B cell (primary cell): ENCODE measurements at regions of chr10 and their contacts with region 1.

Region 1: DNA sequence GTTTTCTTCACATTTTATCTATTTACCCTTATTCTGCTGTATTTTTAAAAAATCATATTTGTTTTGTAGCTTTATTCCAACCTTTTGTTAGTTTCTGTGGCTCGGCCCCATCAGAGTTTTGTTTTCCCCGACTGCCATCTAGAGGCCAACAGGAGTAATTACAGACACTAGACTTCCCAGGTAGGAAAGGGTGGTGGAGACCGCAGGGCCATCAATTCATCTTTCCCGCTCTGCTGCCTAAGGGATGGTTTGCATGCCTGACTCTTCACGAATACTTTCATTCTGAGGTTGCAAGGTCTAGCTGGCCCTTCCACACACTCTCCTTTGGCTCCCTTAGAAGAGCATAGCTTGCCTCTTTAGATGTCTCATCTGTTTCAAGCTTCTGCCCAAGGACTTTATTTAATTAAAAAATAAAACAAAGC is 38.3 kb downstream of the LYZL2 start:
- DNase-seq: peak; percentile 76
- ATAC-seq: peak; percentile 56
- H3K4me3 ChIP-seq: no peak overlapping the region
- H3K4me3 Mint-ChIP-seq: no peak overlapping the region
- H3K27ac ChIP-seq: no peak overlapping the region
- H3K27ac Mint-ChIP-seq: no peak overlapping the region
- H3K4me1 ChIP-seq: peaks cover 14 to 15% of the 10 kb centered on the region in 2 donors
- H3K4me1 Mint-ChIP-seq: peaks cover 17% of the 10 kb centered on the region
- H3K27me3 ChIP-seq: peaks cover 0 to 3% (median 0%) of the 10 kb centered on the region in 4 experiments
- H3K27me3 Mint-ChIP-seq: peaks cover 15% of the 10 kb centered on the region
- CTCF ChIP-seq: peak; percentile 83

Region 2: DNA sequence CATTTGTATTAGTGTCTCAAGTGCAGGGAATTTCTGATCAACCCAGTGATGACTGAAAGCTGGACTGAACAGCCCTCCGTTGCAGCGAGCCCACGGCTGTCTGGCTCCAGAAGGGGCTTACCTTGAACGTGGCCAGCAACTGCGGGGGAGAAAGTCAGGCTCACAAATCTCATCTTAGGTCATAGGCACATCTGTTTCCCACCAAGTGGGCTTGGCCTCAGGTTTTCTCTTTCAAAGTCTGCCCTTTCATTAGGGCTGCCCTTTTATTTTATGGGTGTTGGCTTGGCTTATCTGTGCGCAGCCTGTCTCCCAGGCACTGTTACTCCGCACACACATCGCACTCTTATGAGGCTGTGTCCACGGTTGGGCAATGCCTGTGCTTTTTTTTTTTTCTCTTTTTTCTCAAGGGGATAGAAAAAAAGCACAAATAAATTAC is 709.9 kb before region 1 on chr10:
- CTCF ChIA-PET with region 1: no interaction called
- POLR2A ChIA-PET with region 1: no interaction called
- intact Hi-C with region 1: no loop called
- DNase-seq: no peak
- ATAC-seq: no peak
- H3K4me3 ChIP-seq: no peak overlapping the region
- H3K4me3 Mint-ChIP-seq: no peak overlapping the region
- H3K27ac ChIP-seq: no peak overlapping the region
- H3K27ac Mint-ChIP-seq: no peak overlapping the region
- H3K4me1 ChIP-seq: no peaks in the 10 kb centered on the region
- H3K4me1 Mint-ChIP-seq: no peaks in the 10 kb centered on the region
- H3K27me3 ChIP-seq: peaks cover 0 to 4% (median 1%) of the 10 kb centered on the region in 4 experiments
- H3K27me3 Mint-ChIP-seq: peaks cover 12% of the 10 kb centered on the region
- CTCF ChIP-seq: no peak

Region 3: DNA sequence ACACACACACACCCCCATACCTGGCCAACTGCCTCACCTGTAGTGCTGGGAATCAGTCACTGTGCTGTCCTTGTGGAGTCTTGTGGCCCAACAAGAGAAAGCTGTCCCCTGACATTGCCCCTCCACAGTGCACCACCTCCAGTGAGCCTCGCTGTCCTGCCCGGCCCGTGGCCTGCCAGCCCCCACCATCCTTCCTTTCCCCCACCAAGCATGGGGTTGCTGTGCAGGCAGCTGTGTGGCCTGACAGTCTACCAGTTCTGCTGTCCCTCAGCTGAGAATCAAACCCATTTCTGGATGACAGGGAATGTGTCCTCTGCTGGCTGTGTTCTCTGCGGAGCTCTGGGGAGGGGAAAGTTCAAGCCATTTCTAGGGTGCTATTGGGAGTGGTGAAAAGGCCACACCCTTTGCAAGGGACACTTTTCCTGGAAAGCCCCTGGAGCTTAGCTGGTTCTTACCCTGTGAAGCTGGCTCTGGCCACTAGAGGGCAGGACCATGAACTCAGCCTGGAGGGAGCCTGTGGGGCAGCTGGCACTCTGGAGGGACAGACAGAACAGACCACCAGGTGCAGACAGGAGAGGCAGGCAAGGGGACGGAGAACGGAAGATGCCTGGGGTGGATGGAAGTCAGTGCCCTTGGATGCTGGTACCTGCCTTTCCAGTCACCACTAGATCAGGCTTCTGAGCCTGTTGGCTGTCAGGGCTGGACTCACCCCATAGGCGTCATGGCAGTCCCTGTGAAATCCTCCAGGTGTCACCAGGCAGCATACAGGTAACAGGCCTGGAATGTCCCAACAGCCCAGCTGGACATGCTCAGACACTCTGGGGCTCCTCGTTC is 231.7 kb before region 1 on chr10:
- CTCF ChIA-PET with region 1: interaction called, 90 read pairs
- POLR2A ChIA-PET with region 1: no interaction called
- intact Hi-C with region 1: loop called (anchors 1 kb)
- DNase-seq: peak; percentile 75
- ATAC-seq: peak; percentile 88
- H3K4me3 ChIP-seq: no peak overlapping the region
- H3K4me3 Mint-ChIP-seq: no peak overlapping the region
- H3K27ac ChIP-seq: no peak overlapping the region
- H3K27ac Mint-ChIP-seq: no peak overlapping the region
- H3K4me1 ChIP-seq: peaks cover 3 to 6% of the 10 kb centered on the region in 2 donors
- H3K4me1 Mint-ChIP-seq: peaks cover 3% of the 10 kb centered on the region
- H3K27me3 ChIP-seq: no peaks in the 10 kb centered on the region
- H3K27me3 Mint-ChIP-seq: peaks cover 14% of the 10 kb centered on the region
- CTCF ChIP-seq: peak; percentile 81

Region 4: DNA sequence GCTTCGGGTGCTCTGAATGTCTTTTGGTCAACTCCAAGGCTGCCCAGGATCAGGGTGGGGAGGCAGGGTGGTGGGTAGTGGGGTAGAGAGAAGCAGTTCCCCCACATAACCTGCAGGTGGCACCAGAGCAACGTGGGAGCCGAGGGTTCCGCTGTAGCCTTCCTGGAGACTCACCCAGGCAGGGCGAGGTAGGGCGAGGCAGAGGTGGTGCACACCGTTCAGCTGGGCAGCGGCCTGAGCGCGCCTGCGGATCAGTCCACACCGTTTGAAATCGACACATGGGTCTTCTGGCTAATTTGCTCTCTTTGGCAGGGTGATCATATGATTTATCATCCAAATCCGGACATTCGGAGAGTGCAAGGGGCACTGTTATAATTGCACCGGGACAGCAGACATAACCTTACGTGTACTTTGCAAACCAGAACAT is 198.7 kb before region 1 on chr10:
- CTCF ChIA-PET with region 1: interaction called, 258 read pairs
- POLR2A ChIA-PET with region 1: no interaction called
- intact Hi-C with region 1: loop called (anchors 1 kb)
- DNase-seq: peak; percentile 82
- ATAC-seq: peak; percentile 100
- H3K4me3 ChIP-seq: no peak overlapping the region
- H3K4me3 Mint-ChIP-seq: no peak overlapping the region
- H3K27ac ChIP-seq: no peak overlapping the region
- H3K27ac Mint-ChIP-seq: no peak overlapping the region
- H3K4me1 ChIP-seq: peaks cover 4 to 5% of the 10 kb centered on the region in 2 donors
- H3K4me1 Mint-ChIP-seq: peaks cover 3% of the 10 kb centered on the region
- H3K27me3 ChIP-seq: no peaks in the 10 kb centered on the region
- H3K27me3 Mint-ChIP-seq: peaks cover 15% of the 10 kb centered on the region
- CTCF ChIP-seq: peak; percentile 97

Region 5: GRCh38 chr10:30413996-30414576 is 177.2 kb before region 1 on chr10:
- CTCF ChIA-PET with region 1: interaction called, 20 read pairs
- POLR2A ChIA-PET with region 1: no interaction called
- intact Hi-C with region 1: loop called (anchors 1 kb)
- DNase-seq: peak; percentile 79
- ATAC-seq: peak; percentile 64
- H3K4me3 ChIP-seq: no peak overlapping the region
- H3K4me3 Mint-ChIP-seq: no peak overlapping the region
- H3K27ac ChIP-seq: peak overlapping the region in 1 of 2 donors; percentile 55
- H3K27ac Mint-ChIP-seq: peak overlapping the region; percentile 71
- H3K4me1 ChIP-seq: peaks cover 34 to 35% of the 10 kb centered on the region in 2 donors
- H3K4me1 Mint-ChIP-seq: peaks cover 43% of the 10 kb centered on the region
- H3K27me3 ChIP-seq: no peaks in the 10 kb centered on the region
- H3K27me3 Mint-ChIP-seq: no peaks in the 10 kb centered on the region
- CTCF ChIP-seq: peak; percentile 85

Region 6: DNA sequence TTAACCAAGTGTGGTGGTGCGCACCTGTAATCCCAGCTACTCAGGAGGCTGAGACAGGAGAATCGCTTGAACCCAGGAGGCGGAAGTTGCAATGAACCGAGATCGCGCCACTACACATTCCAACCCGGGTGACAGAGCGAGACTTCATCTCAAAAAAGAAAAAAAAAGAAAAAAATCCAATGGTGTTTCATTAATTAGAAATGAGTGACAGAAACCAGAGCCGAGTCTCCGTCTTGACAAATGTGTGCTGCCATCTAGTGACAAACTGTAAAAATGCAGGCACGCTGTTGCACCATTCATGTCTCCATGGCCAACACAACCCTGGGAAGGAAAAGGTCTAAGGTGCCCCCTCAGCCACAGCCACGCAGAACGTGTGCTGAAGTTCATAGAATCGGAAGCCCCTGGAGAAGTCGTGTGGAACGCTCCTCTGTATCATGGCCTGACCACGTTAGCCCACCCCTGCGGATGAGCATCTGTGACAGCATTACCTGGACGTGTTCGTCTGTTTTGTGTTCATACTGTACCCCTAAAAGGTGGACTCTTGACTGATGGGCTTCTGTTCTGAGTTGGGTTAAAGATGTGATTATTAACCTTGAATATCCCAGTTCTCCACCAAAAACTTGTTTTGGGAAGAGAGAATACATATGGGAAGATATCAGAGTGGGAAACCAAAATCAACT is 56.7 kb before region 1 on chr10:
- CTCF ChIA-PET with region 1: interaction called, 23 read pairs
- POLR2A ChIA-PET with region 1: no interaction called
- intact Hi-C with region 1: loop called (anchors 1 kb)
- DNase-seq: peak; percentile 86
- ATAC-seq: peak; percentile 40
- H3K4me3 ChIP-seq: no peak overlapping the region
- H3K4me3 Mint-ChIP-seq: no peak overlapping the region
- H3K27ac ChIP-seq: no peak overlapping the region
- H3K27ac Mint-ChIP-seq: peak overlapping the region; percentile 22
- H3K4me1 ChIP-seq: peaks cover 42 to 44% of the 10 kb centered on the region in 2 donors
- H3K4me1 Mint-ChIP-seq: peaks cover 36% of the 10 kb centered on the region
- H3K27me3 ChIP-seq: no peaks in the 10 kb centered on the region
- H3K27me3 Mint-ChIP-seq: no peaks in the 10 kb centered on the region
- CTCF ChIP-seq: peak; percentile 93

Region 7: GRCh38 chr10:30639946-30640786 is 48.9 kb after region 1 on chr10:
- CTCF ChIA-PET with region 1: interaction called, 11 read pairs
- POLR2A ChIA-PET with region 1: no interaction called
- intact Hi-C with region 1: no loop called
- DNase-seq: peak; percentile 66
- ATAC-seq: no peak
- H3K4me3 ChIP-seq: no peak overlapping the region
- H3K4me3 Mint-ChIP-seq: no peak overlapping the region
- H3K27ac ChIP-seq: no peak overlapping the region
- H3K27ac Mint-ChIP-seq: no peak overlapping the region
- H3K4me1 ChIP-seq: no peaks in the 10 kb centered on the region
- H3K4me1 Mint-ChIP-seq: no peaks in the 10 kb centered on the region
- H3K27me3 ChIP-seq: peaks cover 0 to 12% (median 3%) of the 10 kb centered on the region in 4 experiments
- H3K27me3 Mint-ChIP-seq: peaks cover 43% of the 10 kb centered on the region
- CTCF ChIP-seq: peak; percentile 93

Region 8: DNA sequence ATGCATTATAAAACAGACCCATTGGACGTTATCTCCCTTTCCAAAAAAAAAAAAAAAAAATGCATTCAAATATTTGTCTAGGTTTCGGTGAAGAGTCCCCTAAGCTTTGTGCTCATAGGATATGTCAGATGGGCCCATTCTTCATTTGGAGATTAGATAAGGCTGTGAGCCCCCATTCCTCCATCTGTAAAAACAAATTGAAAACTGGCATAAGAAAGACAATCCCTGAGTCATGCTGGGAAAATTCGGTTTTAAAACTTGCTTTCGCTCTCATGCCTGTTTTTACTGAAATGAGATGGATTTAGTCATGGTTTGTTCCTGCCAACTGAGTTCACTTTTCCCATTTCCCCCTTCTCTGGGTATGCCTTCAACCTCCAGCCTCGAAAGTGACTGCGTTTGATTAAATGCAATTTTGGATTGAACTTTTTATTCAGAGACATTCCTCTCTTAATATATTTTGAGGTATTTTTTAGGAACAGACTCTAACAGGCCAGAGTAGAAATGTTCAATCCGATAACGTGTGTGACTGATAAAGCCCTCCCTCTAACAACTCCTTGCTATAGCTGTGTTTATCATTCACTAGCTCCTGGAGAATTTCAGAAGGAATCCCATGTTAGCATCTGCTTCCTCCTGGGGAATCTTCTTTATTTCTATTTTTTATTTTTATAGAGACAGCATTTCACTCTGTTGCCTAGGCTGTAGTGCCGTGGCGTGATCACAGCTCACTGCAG is 229.2 kb after region 1 on chr10:
- CTCF ChIA-PET with region 1: no interaction called
- POLR2A ChIA-PET with region 1: no interaction called
- intact Hi-C with region 1: no loop called
- DNase-seq: no peak
- ATAC-seq: no peak
- H3K4me3 ChIP-seq: no peak overlapping the region
- H3K4me3 Mint-ChIP-seq: no peak overlapping the region
- H3K27ac ChIP-seq: no peak overlapping the region
- H3K27ac Mint-ChIP-seq: no peak overlapping the region
- H3K4me1 ChIP-seq: no peaks in the 10 kb centered on the region
- H3K4me1 Mint-ChIP-seq: no peaks in the 10 kb centered on the region
- H3K27me3 ChIP-seq: no peaks in the 10 kb centered on the region
- H3K27me3 Mint-ChIP-seq: peaks cover 7% of the 10 kb centered on the region
- CTCF ChIP-seq: no peak